A549 (cell line): ENCODE measurements at regions of chr17 and their contacts with region 1.

Region 1: DNA sequence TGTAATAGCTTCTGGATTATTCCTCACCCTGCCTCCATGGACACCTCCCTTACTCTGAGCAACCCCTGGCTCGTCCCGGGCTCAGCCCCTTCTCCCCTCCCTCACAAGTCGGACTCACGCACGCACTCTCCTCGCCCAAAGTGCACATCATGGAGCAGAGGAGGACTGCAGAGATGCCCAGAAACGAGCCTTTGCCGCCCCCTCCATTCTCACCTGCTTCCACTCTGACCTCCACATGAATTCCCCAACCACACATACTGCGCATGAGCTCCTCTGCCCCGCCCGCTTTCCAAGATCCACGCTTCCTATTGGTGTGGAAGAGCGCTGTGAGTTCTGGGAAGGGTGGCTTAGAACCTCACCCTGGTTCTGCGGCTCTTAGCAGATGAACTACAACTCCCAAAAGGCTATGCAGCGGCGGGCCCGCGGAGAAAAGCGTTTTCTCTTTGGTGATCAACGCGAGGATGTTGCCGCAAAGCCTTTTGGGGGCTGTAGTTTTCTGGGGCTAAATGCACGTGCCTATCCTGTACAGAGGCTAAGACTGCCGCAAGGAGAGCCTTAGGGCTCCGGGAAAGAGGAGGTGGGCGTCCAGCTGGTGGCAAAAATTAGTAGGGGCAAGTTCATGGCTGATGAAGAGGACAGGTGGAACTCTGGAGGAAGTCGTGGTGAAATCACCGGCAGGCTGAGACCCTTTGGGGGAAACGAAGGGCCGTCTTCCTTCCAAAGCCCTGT is at the start of gene PHB1:
- DNase-seq: peak; percentile 98 to 100
- ATAC-seq: peak; percentile 100
- H3K4me3 ChIP-seq: peak within 1 kb of the TSS; percentile 69
- H3K27ac ChIP-seq: peak within 1 kb of the TSS; percentile 76 to 90
- H3K4me1 ChIP-seq: peaks cover 11% of the 10 kb centered on the region
- CTCF ChIP-seq: no peak
- EP300 ChIP-seq: no peak
- POLR2A ChIP-seq: peak; percentile 89
- RAD21 ChIP-seq: no peak
- polyA plus RNA-seq, gene PHB1: 480 and 556 TPM in 2 replicates

Region 2: GRCh38 chr17:49401971-49402611 is 12.7 kb before region 1 on chr17:
- CTCF ChIA-PET with region 1: interaction called, 147 read pairs
- POLR2A ChIA-PET with region 1: interaction called, 8 read pairs
- DNase-seq: no peak
- ATAC-seq: no peak
- H3K4me3 ChIP-seq: no peak overlapping the region
- H3K27ac ChIP-seq: no peak overlapping the region
- H3K4me1 ChIP-seq: no peaks in the 10 kb centered on the region
- CTCF ChIP-seq: no peak
- EP300 ChIP-seq: no peak
- POLR2A ChIP-seq: no peak
- RAD21 ChIP-seq: no peak